OCI-LY7 (cell line): ENCODE measurements at regions of chr1 and their contacts with region 1.

Region 1: GRCh38 chr1:205335643-205336091 is 14.1 kb upstream of the NUAK2 start:
- DNase-seq: peak; percentile 82
- H3K4me3 ChIP-seq: no peak overlapping the region
- H3K27ac ChIP-seq: no peak overlapping the region
- H3K4me1 ChIP-seq: no peaks in the 10 kb centered on the region
- CTCF ChIP-seq: peak; percentile 100

Region 2: DNA sequence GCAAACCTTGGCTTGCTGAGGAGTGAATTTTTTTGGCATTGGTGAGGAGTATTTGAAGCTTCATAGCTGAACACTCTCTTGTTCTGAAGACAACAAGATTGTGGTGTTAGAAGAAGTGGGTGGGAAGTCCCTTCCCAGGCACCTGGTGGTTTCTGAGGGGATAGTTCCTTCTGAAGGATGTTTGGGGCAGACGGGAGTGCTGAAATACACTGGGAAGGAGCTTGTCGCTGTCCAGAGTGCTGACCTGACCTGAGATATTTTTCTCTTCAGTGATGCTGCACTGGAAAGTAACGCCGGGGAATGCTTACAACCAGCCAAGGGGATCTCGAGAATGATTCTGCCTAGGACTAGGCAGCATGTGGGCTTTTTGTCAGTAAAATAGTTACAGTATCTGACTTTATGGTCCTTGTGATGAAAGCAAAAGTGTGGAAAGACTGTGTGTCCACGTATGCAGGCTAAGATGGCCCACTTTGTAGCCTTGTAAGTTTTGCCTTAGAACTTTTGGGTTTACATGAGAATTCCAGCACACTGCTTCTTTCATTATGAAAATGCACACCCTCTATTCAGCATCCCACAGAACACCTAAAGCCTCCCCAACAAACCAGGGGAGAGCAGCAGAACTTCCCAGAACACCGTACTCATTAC is 498.1 kb before region 1 on chr1:
- CTCF ChIA-PET with region 1: no interaction called
- POLR2A ChIA-PET with region 1: no interaction called
- intact Hi-C with region 1: no loop called
- DNase-seq: peak; percentile 35
- H3K4me3 ChIP-seq: no peak overlapping the region
- H3K27ac ChIP-seq: no peak overlapping the region
- H3K4me1 ChIP-seq: peaks cover 17% of the 10 kb centered on the region
- CTCF ChIP-seq: no peak

Region 3: GRCh38 chr1:205396967-205397616 is 61.4 kb after region 1 on chr1:
- CTCF ChIA-PET with region 1: no interaction called
- POLR2A ChIA-PET with region 1: no interaction called
- intact Hi-C with region 1: loop called (anchors 5 kb)
- DNase-seq: peak; percentile 79
- H3K4me3 ChIP-seq: no peak overlapping the region
- H3K27ac ChIP-seq: no peak overlapping the region
- H3K4me1 ChIP-seq: peaks cover 13% of the 10 kb centered on the region
- CTCF ChIP-seq: peak; percentile 94